ENCODE measurements at regions of chr7 and their contacts with region 1.

Region 1: GRCh38 chr7:151432791-151433521 is 7.0 kb downstream of the CRYGN start:
- DNase-seq: no peak
- ATAC-seq: no peak
- H3K4me3 ChIP-seq: no peak overlapping the region
- H3K27ac ChIP-seq: no peak overlapping the region
- H3K4me1 ChIP-seq: no peaks in the 10 kb centered on the region
- H3K27me3 ChIP-seq: peaks cover 0 to 6% (median 0%) of the 10 kb centered on the region in 3 donors
- CTCF ChIP-seq: no peak

Region 2: GRCh38 chr7:151017953-151018420 is 415.0 kb before region 1 on chr7:
- intact Hi-C with region 1: no loop called
- DNase-seq: peak; percentile 69 to 85
- ATAC-seq: peak; percentile 64 to 84 (median 74)
- H3K4me3 ChIP-seq: peak overlapping the region; percentile 51
- H3K27ac ChIP-seq: no peak overlapping the region
- H3K4me1 ChIP-seq: peaks cover 8% of the 10 kb centered on the region
- H3K27me3 ChIP-seq: peaks cover 0 to 66% (median 6%) of the 10 kb centered on the region in 3 donors
- CTCF ChIP-seq: peak; percentile 87

Region 3: DNA sequence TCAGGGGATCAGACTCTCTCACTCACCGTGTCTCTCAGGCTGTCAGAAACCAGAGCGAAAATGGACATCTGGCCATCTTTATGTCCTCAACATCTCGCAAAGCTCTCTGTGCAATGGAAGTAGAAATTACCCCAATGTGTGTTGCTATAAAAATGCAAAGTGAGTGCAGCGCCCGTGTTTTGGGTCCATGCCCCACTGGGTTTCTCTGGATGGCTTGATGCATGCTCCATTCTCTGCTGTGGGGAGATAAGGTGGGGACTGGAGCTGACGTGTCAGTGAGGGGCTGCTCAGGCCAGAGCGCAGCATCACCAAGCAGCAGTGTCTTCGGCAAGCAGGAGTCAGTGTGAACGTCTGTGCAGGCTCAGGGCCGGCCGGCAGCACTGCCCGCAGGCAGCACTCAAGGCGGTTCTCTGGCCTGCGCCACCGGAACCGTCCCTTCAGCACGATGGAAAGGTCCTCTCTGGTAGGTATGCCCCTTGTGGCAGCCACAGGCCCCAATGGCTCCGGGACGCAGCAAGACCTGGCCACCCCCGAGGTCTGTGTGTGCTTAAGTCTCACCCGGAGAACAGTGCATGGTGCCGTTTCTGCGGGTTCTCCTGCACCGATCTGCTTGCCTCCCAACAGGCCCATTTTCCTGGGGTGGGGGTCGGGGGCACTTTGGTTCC is 53.3 kb before region 1 on chr7:
- intact Hi-C with region 1: loop called in 1 of 2 experiments (anchors 5 kb)
- DNase-seq: no peak
- ATAC-seq: no peak
- H3K4me3 ChIP-seq: no peak overlapping the region
- H3K27ac ChIP-seq: no peak overlapping the region
- H3K4me1 ChIP-seq: peaks cover 13% of the 10 kb centered on the region
- H3K27me3 ChIP-seq: peaks cover 0 to 34% (median 15%) of the 10 kb centered on the region in 3 donors
- CTCF ChIP-seq: no peak

Measured in psoas muscle (tissue), 8 donors.